PC-9 (cell line): ENCODE measurements at regions of chr13 and their contacts with region 1.

Region 1: GRCh38 chr13:42048682-42049453 is 420 bp downstream of the DGKH start:
- DNase-seq: peak; percentile 38 to 77
- H3K4me3 ChIP-seq: peak overlapping the region; percentile 81
- H3K27ac ChIP-seq: 0 out of 2 replicates have a peak overlapping the region, but pooled peaks have one; percentile 39
- H3K4me1 ChIP-seq: peaks cover 11% of the 10 kb centered on the region
- H3K27me3 ChIP-seq: no peaks in the 10 kb centered on the region
- CTCF ChIP-seq: no peak

Region 2: GRCh38 chr13:41905600-41906254 is 143.1 kb before region 1 on chr13:
- CTCF ChIA-PET with region 1: no interaction called
- POLR2A ChIA-PET with region 1: interaction called, 10 read pairs
- intact Hi-C with region 1: loop called (anchors 5 kb)
- DNase-seq: no peak
- H3K4me3 ChIP-seq: no peak overlapping the region
- H3K27ac ChIP-seq: no peak overlapping the region
- H3K4me1 ChIP-seq: no peaks in the 10 kb centered on the region
- H3K27me3 ChIP-seq: no peaks in the 10 kb centered on the region
- CTCF ChIP-seq: peak; percentile 63

Region 3: DNA sequence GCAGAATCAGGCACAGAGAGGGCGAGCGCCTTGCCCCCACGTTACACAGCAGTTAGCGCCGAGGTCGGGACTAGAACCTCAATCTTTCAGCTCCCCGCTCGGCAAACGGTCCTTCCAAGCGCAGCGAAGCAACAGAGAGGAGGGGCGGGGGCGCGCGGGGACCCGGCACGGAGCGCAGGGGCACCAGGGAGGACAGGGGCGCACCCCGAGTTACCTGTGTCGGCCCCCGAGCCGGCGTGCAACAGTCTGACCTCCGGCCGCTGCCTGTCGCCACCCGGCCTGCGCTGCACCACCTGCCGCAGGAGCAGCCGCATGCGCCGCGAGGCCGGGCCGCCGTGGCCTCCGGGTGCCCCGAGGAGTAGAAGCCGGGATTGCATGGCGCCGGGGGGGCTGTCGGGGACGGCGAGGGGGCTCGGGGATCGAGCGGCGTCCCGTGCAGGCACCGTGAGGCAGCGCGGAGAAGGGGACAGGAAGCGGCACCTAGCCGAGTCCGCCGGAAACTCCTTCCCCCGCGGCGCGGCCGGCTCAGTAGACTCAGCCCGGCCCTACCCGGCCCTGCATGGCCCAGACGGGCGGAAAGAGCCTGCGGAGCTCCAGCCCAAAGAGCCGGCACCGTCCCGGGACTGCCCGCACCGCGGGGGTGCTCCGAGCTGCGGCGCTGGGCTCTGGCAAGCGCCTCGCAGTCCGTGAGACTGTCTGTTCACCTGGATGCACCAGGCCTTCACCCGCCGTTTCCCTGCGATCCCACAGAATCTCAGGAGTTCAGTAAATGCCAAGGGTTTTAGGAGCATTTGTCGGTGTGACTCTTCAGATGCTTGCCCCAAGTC is 88.0 kb before region 1 on chr13 and contains the start of gene VWA8:
- CTCF ChIA-PET with region 1: no interaction called
- POLR2A ChIA-PET with region 1: interaction called, 7 read pairs
- intact Hi-C with region 1: loop called (anchors 1 kb)
- DNase-seq: peak in 1 of 2 experiments; percentile 68
- H3K4me3 ChIP-seq: peak within 1 kb of the TSS; percentile 93
- H3K27ac ChIP-seq: peak within 1 kb of the TSS; percentile 48; the same call in 1 of the 2 replicates
- H3K4me1 ChIP-seq: peaks cover 13% of the 10 kb centered on the region
- H3K27me3 ChIP-seq: no peaks in the 10 kb centered on the region
- CTCF ChIP-seq: no peak
- total RNA-seq, gene VWA8: 11.5 and 14.1 TPM in 2 replicates

Region 4: DNA sequence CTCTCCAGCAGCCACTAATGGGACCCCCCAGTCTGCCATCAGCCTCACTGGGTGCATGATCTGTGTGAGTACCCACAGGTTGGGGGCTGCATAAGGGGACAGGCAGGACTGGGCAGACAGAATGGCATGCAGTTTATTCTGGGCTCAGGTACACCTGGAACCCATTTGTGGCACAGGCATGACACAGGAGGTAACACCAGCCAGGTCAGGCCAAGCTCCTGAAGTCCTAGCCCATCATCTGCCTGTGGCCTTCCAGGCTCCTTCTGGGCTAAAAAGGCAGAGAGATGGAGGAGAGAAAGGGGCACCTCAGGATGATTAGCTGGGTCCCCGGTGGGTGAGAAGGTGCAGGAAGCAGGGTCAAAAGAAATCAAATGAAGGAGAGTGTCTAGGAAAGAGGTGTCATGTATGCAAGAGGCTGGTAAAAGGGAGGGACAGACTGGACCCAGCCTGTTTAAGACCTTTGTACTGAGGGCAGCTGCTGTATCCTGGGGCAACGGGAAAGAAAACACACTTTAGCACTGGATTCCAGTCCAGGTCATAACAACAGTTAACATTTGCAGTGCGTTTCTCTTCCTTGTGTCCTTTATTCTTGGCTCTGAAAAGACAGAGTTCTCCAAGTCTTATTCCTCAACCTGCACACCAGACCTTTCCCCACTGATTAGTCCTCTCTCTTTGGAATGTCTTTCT is 20.6 kb before region 1 on chr13:
- CTCF ChIA-PET with region 1: no interaction called
- POLR2A ChIA-PET with region 1: interaction called, 30 read pairs
- intact Hi-C with region 1: no loop called
- DNase-seq: no peak
- H3K4me3 ChIP-seq: no peak overlapping the region
- H3K27ac ChIP-seq: no peak overlapping the region
- H3K4me1 ChIP-seq: peaks cover 21% of the 10 kb centered on the region
- H3K27me3 ChIP-seq: no peaks in the 10 kb centered on the region
- CTCF ChIP-seq: no peak

Region 5: DNA sequence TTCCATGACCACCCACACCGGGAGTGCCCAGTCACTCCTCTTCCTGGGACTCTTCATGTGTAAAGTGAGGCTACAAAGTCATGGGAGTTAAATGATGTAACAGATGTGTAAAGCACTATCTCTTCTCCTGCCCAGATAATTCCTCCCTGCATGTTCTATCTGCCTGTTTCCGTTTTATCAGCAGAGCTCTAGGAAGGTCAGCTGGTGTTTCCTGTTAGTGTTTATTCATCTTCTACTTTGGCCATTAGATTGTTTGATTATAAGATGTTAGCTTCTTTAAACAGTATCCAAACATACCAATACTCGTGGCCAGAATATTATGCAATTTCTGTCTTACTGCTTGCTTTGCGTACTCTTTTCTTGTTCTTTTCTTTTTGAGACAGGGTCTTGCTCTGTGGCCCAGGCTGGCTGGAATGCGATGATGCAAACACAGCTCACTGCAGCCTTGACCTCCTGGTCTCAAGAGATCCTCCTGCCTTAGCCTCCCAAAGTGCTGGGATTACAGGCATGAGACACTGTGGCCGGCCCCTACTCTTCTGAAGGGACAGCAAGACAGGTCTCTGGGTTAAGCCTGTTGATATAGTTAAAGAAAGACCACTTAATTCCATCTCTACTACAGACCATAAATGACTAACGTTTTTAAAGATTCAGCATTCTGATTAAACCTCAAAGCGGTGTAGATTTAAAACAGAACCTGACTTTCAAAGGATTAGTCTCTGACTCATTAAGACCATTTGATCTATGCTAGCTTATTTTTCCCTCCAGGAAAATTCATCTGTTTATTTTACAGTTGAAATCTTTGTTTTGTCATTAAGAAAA is 125.7 kb after region 1 on chr13:
- CTCF ChIA-PET with region 1: no interaction called
- POLR2A ChIA-PET with region 1: no interaction called
- intact Hi-C with region 1: no loop called
- DNase-seq: no peak
- H3K4me3 ChIP-seq: no peak overlapping the region
- H3K27ac ChIP-seq: no peak overlapping the region
- H3K4me1 ChIP-seq: no peaks in the 10 kb centered on the region
- H3K27me3 ChIP-seq: no peaks in the 10 kb centered on the region
- CTCF ChIP-seq: no peak